ENCODE measurements at regions of chr1 and their contacts with region 1.

Region 1: DNA sequence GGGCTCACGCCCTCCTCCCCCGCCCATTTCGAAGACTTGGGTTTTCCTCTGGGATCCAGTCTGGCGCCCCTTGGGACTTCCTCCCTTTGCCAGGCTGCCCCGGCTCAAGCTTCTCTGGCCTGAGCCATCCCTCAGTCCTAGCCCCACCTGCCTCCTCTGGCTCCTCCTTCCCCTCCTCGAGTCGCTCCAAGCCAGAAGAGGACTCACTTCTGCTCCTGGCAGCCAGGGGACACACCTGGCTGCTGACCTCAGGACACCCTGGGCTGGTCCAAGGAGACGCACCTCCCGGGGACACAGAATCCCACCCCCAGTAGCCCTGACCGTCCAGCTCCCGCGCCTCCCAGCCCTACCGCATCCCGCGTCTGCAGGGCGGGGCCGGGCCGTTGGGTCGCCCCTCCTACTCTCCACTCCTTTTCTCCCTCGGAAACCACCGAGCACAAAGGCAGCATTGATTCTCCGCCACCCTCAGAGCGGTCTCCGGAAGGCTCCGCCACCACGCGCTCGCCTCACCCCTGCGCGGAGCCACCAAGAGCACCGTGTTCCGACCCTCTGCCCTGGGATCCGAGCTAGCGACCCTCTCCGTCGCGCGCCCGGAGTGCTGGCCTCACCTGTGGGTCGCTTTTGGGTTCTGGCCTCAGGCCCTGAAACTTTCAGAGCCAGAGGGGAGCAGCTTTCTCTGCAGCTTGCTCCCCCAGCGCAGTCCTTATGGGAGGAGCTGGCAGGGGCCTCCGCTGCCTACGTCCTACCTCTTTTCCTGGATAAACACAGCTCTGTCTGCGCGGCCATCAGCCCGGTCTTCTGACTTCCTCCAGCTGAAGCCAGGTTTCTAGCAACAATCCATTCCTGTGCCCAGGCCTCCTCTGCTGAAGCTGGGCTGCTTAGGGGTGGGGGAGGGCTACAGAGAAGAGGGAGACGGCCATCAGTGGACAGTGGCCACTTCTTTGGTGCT is at the start of gene C2CD4D:
- DNase-seq: peak in 1 of 2 donors; percentile 6
- ATAC-seq: no peak
- H3K4me3 ChIP-seq: peak within 1 kb of the TSS in 3 of 4 donors; percentile 43 to 56 (median 43)
- H3K27ac ChIP-seq: no peak within 1 kb of the TSS
- H3K4me1 ChIP-seq: peaks cover 7 to 10% of the 10 kb centered on the region in 2 donors
- H3K27me3 ChIP-seq: peaks cover 21 to 30% (median 26%) of the 10 kb centered on the region in 3 donors
- CTCF ChIP-seq: no peak
- POLR2A ChIP-seq: no peak
- total RNA-seq, gene C2CD4D: not detected

Region 2: GRCh38 chr1:151443846-151444782 is 395.6 kb before region 1 on chr1:
- in situ Hi-C with region 1: no loop called
- intact Hi-C with region 1: loop called (anchors 2 kb)
- DNase-seq: peak; percentile 18 to 56
- ATAC-seq: peak; percentile 89 to 94
- H3K4me3 ChIP-seq: no peak overlapping the region
- H3K27ac ChIP-seq: peak overlapping the region; percentile 19 to 63 (median 46)
- H3K4me1 ChIP-seq: peaks cover 33 to 56% of the 10 kb centered on the region in 2 donors
- H3K27me3 ChIP-seq: no peaks in the 10 kb centered on the region
- CTCF ChIP-seq: peak; percentile 45 to 79 (median 57)
- POLR2A ChIP-seq: no peak

Region 3: DNA sequence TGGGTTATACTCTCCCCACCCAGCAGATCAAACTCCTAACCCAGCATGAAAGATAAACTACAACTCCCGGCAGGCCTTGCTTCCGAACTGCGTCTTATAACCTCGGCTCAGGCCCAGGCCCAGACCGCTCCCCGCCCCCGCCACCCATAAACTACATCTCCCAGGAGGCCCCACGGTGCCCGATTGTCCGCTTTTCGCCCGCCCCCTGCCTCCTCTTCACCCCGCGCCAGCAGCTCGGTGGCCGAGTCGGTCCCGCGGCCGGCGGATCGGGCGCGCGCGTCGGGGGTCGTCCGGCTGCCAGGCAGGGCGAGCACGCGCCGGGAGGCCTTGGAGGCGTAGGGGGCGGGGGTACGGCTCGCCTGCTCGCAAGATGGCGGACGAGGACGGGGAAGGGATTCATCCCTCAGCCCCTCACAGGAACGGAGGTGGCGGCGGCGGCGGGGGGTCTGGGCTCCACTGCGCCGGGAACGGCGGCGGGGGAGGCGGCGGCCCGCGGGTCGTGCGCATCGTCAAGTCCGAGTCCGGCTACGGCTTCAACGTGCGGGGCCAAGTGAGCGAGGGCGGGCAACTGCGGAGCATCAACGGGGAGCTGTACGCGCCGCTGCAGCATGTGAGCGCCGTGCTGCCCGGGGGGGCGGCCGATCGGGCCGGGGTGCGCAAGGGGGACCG is 227.8 kb before region 1 on chr1 and contains the start of gene SNX27:
- in situ Hi-C with region 1: loop called in 1 of 4 experiments (anchors 25 kb)
- intact Hi-C with region 1: no loop called
- DNase-seq: peak; percentile 93 to 94
- ATAC-seq: peak; percentile 93 to 94
- H3K4me3 ChIP-seq: peak within 1 kb of the TSS; percentile 76 to 86 (median 80)
- H3K27ac ChIP-seq: peak within 1 kb of the TSS; percentile 80 to 97 (median 94)
- H3K4me1 ChIP-seq: peaks cover 29 to 42% of the 10 kb centered on the region in 2 donors
- H3K27me3 ChIP-seq: no peaks in the 10 kb centered on the region
- CTCF ChIP-seq: no peak
- POLR2A ChIP-seq: peak; percentile 85 to 87
- total RNA-seq, gene SNX27: 37.0 to 43.7 (median 40.9) TPM

Region 4: DNA sequence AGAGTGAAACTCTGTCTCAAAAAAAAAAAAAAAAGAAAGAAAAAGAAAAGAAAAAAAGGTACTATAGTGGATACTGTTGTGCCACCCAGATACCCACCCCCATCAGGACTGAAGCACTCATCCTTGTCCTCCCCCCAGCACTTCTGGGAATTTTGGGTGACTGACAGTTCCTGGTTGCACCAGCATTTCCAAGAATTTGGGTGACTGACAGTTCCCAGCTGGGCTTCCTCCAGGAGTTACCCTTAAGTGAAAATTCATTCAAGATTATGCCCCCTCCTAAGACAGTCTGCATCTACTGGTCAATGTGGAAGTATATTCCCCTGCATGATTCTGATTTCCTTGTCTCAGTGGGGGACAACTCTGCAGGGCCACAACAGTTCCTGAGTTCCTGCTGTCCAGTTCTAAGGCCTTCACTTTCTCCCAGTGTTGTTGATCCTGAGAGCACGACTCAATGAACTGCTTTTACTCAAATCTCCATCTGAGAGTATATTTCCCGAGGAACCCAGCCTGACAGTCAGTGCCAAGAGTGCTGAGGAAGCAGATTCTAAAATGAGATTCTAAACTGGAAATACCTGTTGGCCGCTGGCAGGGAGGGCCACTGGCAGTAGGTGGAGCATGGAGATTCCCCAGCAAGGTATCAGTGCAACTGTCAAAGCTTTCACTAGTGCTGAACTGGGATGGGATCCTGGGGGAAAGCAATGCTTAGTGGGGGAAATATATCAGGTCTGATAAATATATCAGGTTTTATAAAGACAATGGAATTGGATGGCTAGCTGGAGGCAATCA is 99.9 kb before region 1 on chr1:
- in situ Hi-C with region 1: no loop called
- intact Hi-C with region 1: loop called (anchors 2 kb)
- DNase-seq: no peak
- ATAC-seq: no peak
- H3K4me3 ChIP-seq: no peak overlapping the region
- H3K27ac ChIP-seq: no peak overlapping the region
- H3K4me1 ChIP-seq: peaks cover 4 to 5% of the 10 kb centered on the region in 2 donors
- H3K27me3 ChIP-seq: no peaks in the 10 kb centered on the region
- CTCF ChIP-seq: no peak
- POLR2A ChIP-seq: no peak

Region 5: GRCh38 chr1:151790071-151790940 is 49.4 kb before region 1 on chr1 and contains the start of gene TDRKH:
- in situ Hi-C with region 1: no loop called
- intact Hi-C with region 1: loop called (anchors 1 kb)
- DNase-seq: peak; percentile 99
- ATAC-seq: peak; percentile 99
- H3K4me3 ChIP-seq: peak within 1 kb of the TSS; percentile 63 to 88 (median 84)
- H3K27ac ChIP-seq: peak within 1 kb of the TSS; percentile 75 to 80 (median 80)
- H3K4me1 ChIP-seq: peaks cover 12 to 14% of the 10 kb centered on the region in 2 donors
- H3K27me3 ChIP-seq: no peaks in the 10 kb centered on the region
- CTCF ChIP-seq: peak in 3 of 5 experiments; percentile 23 to 40 (median 39)
- POLR2A ChIP-seq: peak; percentile 65 to 86
- total RNA-seq, gene TDRKH: 3.9 to 8.3 (median 4.6) TPM